ENCODE measurements at regions of chr12 and their contacts with region 1.

Region 1: DNA sequence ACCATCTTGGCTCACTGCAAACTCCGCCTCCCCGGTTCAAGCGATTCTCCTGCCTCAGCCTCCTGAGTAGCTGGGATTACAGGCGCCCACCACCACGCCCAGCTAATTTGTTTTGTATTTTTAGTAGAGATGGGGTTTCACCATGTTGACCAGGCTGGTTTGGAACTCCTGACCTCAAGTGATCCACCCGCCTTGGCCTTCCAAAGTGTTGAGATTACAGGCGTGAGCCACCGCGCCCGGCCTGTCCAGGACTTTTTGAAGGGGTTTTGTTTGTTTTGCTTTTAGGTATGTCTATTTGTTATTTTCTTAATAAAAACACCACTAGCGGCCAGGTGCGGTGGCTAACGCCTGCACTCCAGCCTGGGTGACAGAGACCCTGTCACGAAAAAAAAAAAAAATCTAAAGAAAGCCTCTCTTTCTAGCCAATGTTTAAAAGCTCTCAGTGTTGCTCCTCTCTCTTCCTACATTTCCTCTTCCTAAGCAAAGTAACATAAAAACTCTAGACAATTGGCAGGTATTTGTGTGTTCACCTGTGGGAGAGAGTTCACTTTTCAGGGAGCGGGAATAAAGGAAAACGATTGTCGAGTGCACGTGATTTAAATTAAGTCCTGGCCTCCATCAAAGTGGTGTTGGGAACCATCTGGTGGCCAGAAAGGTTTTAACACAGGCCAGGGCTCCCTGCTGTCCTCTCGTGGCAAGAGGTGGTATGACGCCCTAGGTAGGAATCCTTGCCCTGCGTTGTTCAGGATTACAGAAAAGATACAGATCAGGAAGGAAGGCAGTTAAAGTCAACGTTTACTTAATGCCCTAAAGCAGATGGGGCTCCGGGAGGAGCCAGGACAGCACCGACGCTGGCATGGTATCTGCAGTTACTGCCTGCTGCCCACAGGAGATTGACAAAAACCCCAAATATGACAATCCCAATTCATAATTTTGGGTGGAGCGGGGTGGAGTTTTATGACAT is 36.2 kb upstream of the ATP23 start:
- DNase-seq: peak; percentile 92
- H3K4me3 ChIP-seq: no peak overlapping the region
- H3K27ac ChIP-seq: peak overlapping the region in 1 of 2 donors; percentile 46
- H3K4me1 ChIP-seq: no peaks in the 10 kb centered on the region
- H3K27me3 ChIP-seq: no peaks in the 10 kb centered on the region
- CTCF ChIP-seq: peak; percentile 100
- POLR2A ChIP-seq: no peak

Region 2: DNA sequence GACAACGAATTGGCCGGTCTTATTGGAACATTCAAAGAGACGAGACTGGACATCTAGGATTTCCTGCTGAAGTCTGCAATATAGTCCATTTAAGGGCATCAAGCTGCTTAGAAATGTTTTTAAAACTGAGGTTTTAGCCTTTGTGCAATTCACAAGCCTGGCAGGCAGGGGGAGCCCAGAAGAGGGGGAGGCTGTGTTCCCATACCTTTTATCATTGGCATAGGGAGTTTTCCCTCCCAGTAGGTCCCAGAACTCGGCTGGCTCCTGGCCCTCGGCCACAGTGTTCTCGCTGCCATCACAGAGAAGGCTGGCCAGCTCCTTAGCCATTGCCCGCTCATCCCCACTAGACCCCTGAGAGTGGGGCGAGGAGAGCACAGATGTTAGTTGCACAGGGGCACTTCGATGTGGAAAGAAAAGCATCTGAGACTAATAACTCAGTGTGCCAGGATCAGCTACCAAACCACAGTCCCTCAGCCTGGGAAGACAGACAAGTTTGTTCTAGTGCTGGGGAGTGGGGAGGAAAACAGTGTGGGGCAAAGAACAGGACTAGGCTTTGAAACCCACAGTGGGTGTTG is 101.7 kb before region 1 on chr12:
- intact Hi-C with region 1: loop called (anchors 1 kb)
- DNase-seq: no peak
- H3K4me3 ChIP-seq: no peak overlapping the region
- H3K27ac ChIP-seq: no peak overlapping the region
- H3K4me1 ChIP-seq: no peaks in the 10 kb centered on the region
- H3K27me3 ChIP-seq: no peaks in the 10 kb centered on the region
- CTCF ChIP-seq: peak in 3 of 4 experiments; percentile 62 to 76 (median 75)
- POLR2A ChIP-seq: no peak

Region 3: DNA sequence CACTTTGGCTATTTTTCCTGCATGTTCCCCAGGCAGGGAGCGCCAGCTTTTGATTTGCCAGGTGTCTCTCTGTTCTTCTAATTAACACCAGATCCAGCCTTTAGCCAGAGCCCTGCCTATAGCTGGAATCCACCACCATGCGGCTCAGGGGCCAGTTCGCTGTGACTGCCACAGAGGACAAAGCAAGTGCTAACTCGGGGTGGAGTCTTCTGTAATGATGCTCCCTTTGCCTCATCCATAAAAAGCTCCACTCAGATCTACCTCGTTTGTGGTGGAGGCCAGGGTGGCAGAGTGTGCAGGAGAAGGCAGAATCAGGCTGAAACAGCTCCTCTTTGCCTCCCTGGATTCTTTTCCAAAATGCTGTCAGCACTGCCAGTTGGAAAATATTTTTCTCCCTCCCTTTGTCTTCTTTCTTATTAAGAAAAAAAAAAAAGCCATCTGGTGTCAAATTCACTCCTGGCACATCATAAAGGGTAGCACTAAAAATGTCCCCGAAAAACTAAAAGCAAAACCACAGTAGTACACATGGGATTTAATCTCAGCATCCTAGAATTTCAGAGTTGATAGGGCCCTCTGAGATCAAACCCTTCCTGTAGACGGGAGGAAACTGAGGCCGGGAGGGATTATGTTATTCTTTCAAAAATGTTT is 40.6 kb before region 1 on chr12:
- intact Hi-C with region 1: no loop called
- DNase-seq: peak; percentile 10
- H3K4me3 ChIP-seq: peak overlapping the region; percentile 42 to 46
- H3K27ac ChIP-seq: peak overlapping the region; percentile 82 to 91
- H3K4me1 ChIP-seq: peaks cover 7% of the 10 kb centered on the region
- H3K27me3 ChIP-seq: no peaks in the 10 kb centered on the region
- CTCF ChIP-seq: no peak
- POLR2A ChIP-seq: no peak